H1 (cell line): ENCODE measurements at regions of chr4 and their contacts with region 1.

Region 1: GRCh38 chr4:15396157-15396800 is 31.6 kb upstream of the C1QTNF7 start:
- DNase-seq: peak; percentile 9 to 80
- H3K4me3 ChIP-seq: no peak overlapping the region
- H3K27ac ChIP-seq: no peak overlapping the region
- H3K4me1 ChIP-seq: peaks cover 0 to 2% (median 0%) of the 10 kb centered on the region in 4 experiments; a peak in 1 of 7 replicates
- H3K27me3 ChIP-seq: no peaks in the 10 kb centered on the region
- CTCF ChIP-seq: peak; percentile 41 to 83 (median 82)
- EP300 ChIP-seq: no peak
- POLR2A ChIP-seq: no peak
- RAD21 ChIP-seq: peak; percentile 87 to 89

Region 2: GRCh38 chr4:15144249-15144966 is 251.9 kb before region 1 on chr4:
- CTCF ChIA-PET with region 1: no interaction called
- POLR2A ChIA-PET with region 1: no interaction called
- DNase-seq: no peak
- H3K4me3 ChIP-seq: no peak overlapping the region
- H3K27ac ChIP-seq: no peak overlapping the region
- H3K4me1 ChIP-seq: peaks cover 4 to 7% (median 5%) of the 10 kb centered on the region in 4 experiments
- H3K27me3 ChIP-seq: no peaks in the 10 kb centered on the region
- CTCF ChIP-seq: no peak
- EP300 ChIP-seq: no peak
- POLR2A ChIP-seq: no peak
- RAD21 ChIP-seq: peak; percentile 29 to 47; a peak in 3 of 4 replicates

Region 3: GRCh38 chr4:15238720-15239119 is 157.6 kb before region 1 on chr4:
- CTCF ChIA-PET with region 1: interaction called, 88 read pairs
- POLR2A ChIA-PET with region 1: no interaction called
- DNase-seq: peak in 1 of 2 experiments; percentile 65
- H3K4me3 ChIP-seq: no peak overlapping the region
- H3K27ac ChIP-seq: no peak overlapping the region
- H3K4me1 ChIP-seq: no peaks in the 10 kb centered on the region
- H3K27me3 ChIP-seq: no peaks in the 10 kb centered on the region
- CTCF ChIP-seq: peak; percentile 35 to 83 (median 72)
- EP300 ChIP-seq: no peak
- POLR2A ChIP-seq: no peak
- RAD21 ChIP-seq: peak; percentile 96 to 97

Region 4: GRCh38 chr4:15253201-15253748 is 143.0 kb before region 1 on chr4:
- CTCF ChIA-PET with region 1: interaction called, 10 read pairs
- POLR2A ChIA-PET with region 1: no interaction called
- DNase-seq: no peak
- H3K4me3 ChIP-seq: no peak overlapping the region
- H3K27ac ChIP-seq: no peak overlapping the region
- H3K4me1 ChIP-seq: peaks cover 0 to 5% (median under 1%) of the 10 kb centered on the region in 4 experiments; a peak in 3 of 7 replicates
- H3K27me3 ChIP-seq: peaks cover 0 to 3% (median 0%) of the 10 kb centered on the region in 4 experiments; a peak in 1 of 7 replicates
- CTCF ChIP-seq: no peak
- EP300 ChIP-seq: no peak
- POLR2A ChIP-seq: no peak
- RAD21 ChIP-seq: no peak

Region 5: GRCh38 chr4:15378062-15378461 is 18.2 kb before region 1 on chr4:
- CTCF ChIA-PET with region 1: interaction called, 42 read pairs
- POLR2A ChIA-PET with region 1: no interaction called
- DNase-seq: no peak
- H3K4me3 ChIP-seq: no peak overlapping the region
- H3K27ac ChIP-seq: no peak overlapping the region
- H3K4me1 ChIP-seq: peaks cover 0 to 4% (median 2%) of the 10 kb centered on the region in 4 experiments; a peak in 3 of 7 replicates
- H3K27me3 ChIP-seq: no peaks in the 10 kb centered on the region
- CTCF ChIP-seq: no peak
- EP300 ChIP-seq: no peak
- POLR2A ChIP-seq: no peak
- RAD21 ChIP-seq: no peak

Region 6: DNA sequence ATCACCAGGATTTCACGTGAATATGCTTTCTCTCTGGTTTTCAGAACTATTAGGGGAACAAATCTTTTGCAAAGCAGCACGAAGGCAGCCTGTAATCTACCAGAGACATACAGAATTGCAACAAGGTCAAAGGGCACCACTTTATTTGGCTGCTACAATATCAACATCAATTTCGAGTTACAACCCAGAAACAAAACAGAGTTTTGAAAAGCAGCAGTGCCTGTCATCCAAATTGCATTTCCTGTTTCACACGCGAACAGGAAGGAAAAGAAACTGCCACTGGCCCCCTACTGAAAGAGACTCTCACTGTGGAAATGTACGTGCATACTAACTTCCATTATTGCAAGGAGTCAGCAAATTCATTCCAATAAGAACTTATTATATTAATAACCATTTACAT is 14.5 kb after region 1 on chr4:
- CTCF ChIA-PET with region 1: interaction called, 21 read pairs
- POLR2A ChIA-PET with region 1: no interaction called
- DNase-seq: no peak
- H3K4me3 ChIP-seq: no peak overlapping the region
- H3K27ac ChIP-seq: no peak overlapping the region
- H3K4me1 ChIP-seq: peaks cover 0 to 1% (median 0%) of the 10 kb centered on the region in 4 experiments; a peak in 1 of 7 replicates
- H3K27me3 ChIP-seq: no peaks in the 10 kb centered on the region
- CTCF ChIP-seq: no peak
- EP300 ChIP-seq: no peak
- POLR2A ChIP-seq: no peak
- RAD21 ChIP-seq: no peak

Region 7: DNA sequence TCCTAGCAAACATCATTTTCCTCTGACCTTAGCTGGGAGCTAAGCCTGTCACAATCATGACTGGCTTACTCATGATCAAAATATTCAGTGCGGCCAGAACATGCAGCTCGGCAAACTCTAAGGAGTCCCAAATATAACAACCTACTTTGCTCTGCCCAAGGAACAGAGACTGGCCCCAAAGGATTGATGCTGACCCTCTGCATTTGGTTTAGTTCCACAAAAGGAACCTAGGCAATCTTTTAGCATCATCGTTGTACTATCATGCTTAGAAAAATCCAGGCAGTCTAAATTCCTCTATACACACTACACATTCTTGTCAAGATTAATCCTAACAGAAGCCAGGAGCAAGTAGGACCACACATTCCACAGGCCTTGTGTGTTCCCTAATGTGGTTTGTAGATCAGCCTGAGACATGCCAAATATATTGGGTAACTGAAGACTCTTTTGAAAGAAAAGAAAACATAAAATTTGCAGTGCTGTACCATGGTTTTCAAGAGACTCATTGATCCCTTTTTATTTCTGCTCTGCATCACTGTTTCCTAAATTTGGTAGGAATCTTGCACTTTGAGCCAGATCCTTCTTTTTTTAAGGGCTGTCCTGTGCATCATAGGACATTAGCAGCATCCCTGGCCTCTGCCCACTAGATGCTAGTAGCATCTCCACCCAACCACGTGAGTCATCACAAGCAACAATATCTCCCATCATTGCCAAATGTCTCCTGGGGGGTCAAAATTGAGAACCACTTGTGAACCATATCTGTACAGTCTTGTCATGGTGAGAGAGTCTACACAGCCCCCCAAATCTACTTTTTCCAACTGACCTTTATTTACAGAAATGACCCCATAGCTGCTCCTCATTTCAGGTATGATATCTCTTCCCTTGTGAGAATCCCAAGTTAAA is 55.8 kb after region 1 on chr4:
- CTCF ChIA-PET with region 1: interaction called, 21 read pairs
- POLR2A ChIA-PET with region 1: no interaction called
- DNase-seq: no peak
- H3K4me3 ChIP-seq: no peak overlapping the region
- H3K27ac ChIP-seq: no peak overlapping the region
- H3K4me1 ChIP-seq: no peaks in the 10 kb centered on the region
- H3K27me3 ChIP-seq: no peaks in the 10 kb centered on the region
- CTCF ChIP-seq: no peak
- EP300 ChIP-seq: no peak
- POLR2A ChIP-seq: no peak
- RAD21 ChIP-seq: no peak